ENCODE measurements at regions of chr16 and their contacts with region 1.

Region 1: DNA sequence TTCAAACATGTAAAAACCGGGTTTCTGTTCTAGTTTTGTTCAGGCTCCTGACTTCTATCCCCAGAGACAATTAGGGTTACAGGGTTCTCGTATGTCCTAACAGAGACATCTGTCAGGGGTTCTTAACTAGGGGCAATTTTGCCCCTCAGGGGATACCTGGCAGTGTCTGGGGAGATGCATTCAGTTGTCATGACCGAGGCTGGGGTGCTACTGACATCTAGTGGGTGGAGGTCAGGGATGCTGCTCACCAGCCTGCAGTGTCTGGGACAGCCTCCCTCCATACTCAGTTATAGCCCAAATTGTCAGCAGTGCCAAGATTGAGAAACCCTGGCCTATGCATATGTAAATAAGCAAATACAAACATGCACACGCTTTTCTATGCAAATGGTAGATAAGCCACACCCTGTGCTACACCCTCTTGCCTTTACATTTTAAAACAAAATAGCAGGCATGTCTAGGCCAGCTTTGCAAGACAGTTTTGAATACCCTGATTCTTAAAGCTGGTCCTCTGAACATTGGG is 37.4 kb downstream of the CLEC16A start:
- DNase-seq: peak; percentile 73
- ATAC-seq: peak; percentile 93
- H3K4me3 ChIP-seq: no peak overlapping the region
- H3K4me3 Mint-ChIP-seq: peak overlapping the region; percentile 82
- H3K27ac ChIP-seq: peak overlapping the region in 1 of 2 donors; percentile 10
- H3K27ac Mint-ChIP-seq: peak overlapping the region; percentile 84
- H3K4me1 ChIP-seq: peaks cover 4 to 22% of the 10 kb centered on the region in 2 donors
- H3K4me1 Mint-ChIP-seq: peaks cover 39% of the 10 kb centered on the region
- H3K27me3 ChIP-seq: no peaks in the 10 kb centered on the region
- H3K27me3 Mint-ChIP-seq: no peaks in the 10 kb centered on the region
- CTCF ChIP-seq: peak; percentile 66

Region 2: DNA sequence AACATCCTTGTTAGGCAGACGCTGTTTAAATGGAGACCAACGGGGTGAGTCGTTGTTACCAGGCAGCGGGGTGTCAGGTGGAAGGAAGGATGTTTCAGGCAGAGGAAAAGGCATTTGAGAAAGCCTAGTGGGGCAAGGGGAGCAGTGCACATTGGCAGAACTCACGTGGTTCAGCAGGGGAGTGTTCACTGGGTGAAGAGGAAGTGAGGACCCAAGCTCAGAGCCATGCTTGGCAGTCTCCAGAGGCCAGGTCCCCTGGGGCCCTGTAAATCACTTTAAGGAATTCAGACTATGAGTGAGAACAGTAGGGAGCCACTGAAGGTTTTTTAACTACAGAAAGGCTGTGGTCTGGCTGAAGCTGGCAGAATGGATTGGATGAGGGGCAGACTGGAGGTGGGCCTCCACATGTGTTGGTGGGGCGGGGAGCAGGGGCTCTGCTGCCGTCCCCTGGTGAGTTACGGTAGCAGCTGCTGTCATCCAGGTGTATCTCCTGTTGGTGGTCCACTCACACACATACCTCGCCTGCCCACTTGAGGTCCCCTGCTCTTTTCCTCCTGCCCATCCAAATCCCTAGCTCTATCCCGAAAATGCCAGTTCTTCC is 32.3 kb before region 1 on chr16:
- CTCF ChIA-PET with region 1: interaction called, 24 read pairs
- POLR2A ChIA-PET with region 1: no interaction called
- intact Hi-C with region 1: loop called (anchors 1 kb)
- DNase-seq: peak; percentile 91
- ATAC-seq: peak; percentile 91
- H3K4me3 ChIP-seq: peak overlapping the region in 2 of 5 experiments; percentile 8 to 14
- H3K4me3 Mint-ChIP-seq: peak overlapping the region; percentile 80
- H3K27ac ChIP-seq: peak overlapping the region; percentile 67 to 78
- H3K27ac Mint-ChIP-seq: peak overlapping the region; percentile 96
- H3K4me1 ChIP-seq: peaks cover 52 to 63% of the 10 kb centered on the region in 2 donors
- H3K4me1 Mint-ChIP-seq: peaks cover 75% of the 10 kb centered on the region
- H3K27me3 ChIP-seq: no peaks in the 10 kb centered on the region
- H3K27me3 Mint-ChIP-seq: no peaks in the 10 kb centered on the region
- CTCF ChIP-seq: peak; percentile 59

Region 3: DNA sequence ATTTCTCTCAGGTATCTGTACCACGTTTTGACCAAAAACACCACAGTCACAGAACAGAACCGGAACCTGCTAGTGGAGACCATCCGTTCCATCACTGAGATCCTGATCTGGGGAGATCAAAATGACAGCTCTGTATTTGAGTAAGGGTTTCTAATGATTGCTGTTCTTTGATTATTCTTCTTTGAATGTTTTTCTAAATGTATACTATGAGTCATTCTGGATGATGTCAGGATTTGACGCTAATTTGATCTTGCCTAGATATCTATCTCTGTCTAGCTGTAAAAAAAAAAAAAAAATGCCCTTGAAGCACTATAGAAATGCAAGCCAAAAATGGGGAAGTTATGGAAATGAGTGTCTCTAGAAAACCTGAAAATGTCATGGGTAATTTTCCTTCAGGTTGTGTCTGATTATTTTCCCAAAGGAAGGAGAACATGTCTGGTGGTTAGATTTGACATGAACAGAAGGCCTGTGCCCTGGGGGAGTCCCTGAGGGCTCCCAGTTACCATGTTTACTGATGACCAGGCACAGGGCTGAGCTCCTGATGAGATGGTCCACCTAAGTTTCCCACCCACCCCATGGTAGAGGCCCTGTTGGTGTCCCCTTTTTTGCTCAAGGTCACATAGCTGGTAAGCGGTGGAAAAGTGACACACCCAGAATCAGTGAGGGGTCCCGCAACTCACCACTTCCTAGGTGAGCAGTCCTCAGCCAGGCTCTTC is 23.8 kb before region 1 on chr16:
- CTCF ChIA-PET with region 1: interaction called, 64 read pairs
- POLR2A ChIA-PET with region 1: interaction called, 4 read pairs
- intact Hi-C with region 1: loop called (anchors 1 kb)
- DNase-seq: peak; percentile 31
- ATAC-seq: peak; percentile 63
- H3K4me3 ChIP-seq: no peak overlapping the region
- H3K4me3 Mint-ChIP-seq: peak overlapping the region; percentile 53
- H3K27ac ChIP-seq: peak overlapping the region in 1 of 2 donors; percentile 22
- H3K27ac Mint-ChIP-seq: peak overlapping the region; percentile 62
- H3K4me1 ChIP-seq: peaks cover 21 to 30% of the 10 kb centered on the region in 2 donors
- H3K4me1 Mint-ChIP-seq: peaks cover 49% of the 10 kb centered on the region
- H3K27me3 ChIP-seq: no peaks in the 10 kb centered on the region
- H3K27me3 Mint-ChIP-seq: no peaks in the 10 kb centered on the region
- CTCF ChIP-seq: no peak

Region 4: GRCh38 chr16:10971560-10971961 is 10.2 kb before region 1 on chr16:
- CTCF ChIA-PET with region 1: interaction called, 12 read pairs
- POLR2A ChIA-PET with region 1: interaction called, 3 read pairs
- intact Hi-C with region 1: loop called (anchors 1 kb)
- DNase-seq: peak; percentile 64
- ATAC-seq: peak; percentile 39
- H3K4me3 ChIP-seq: no peak overlapping the region
- H3K4me3 Mint-ChIP-seq: no peak overlapping the region
- H3K27ac ChIP-seq: no peak overlapping the region
- H3K27ac Mint-ChIP-seq: no peak overlapping the region
- H3K4me1 ChIP-seq: no peaks in the 10 kb centered on the region
- H3K4me1 Mint-ChIP-seq: peaks cover 6% of the 10 kb centered on the region
- H3K27me3 ChIP-seq: no peaks in the 10 kb centered on the region
- H3K27me3 Mint-ChIP-seq: no peaks in the 10 kb centered on the region
- CTCF ChIP-seq: peak; percentile 89

Region 5: GRCh38 chr16:11105038-11105903 is 123.5 kb after region 1 on chr16:
- CTCF ChIA-PET with region 1: interaction called, 3 read pairs
- POLR2A ChIA-PET with region 1: no interaction called
- intact Hi-C with region 1: loop called (anchors 5 kb)
- DNase-seq: peak; percentile 70
- ATAC-seq: peak; percentile 92
- H3K4me3 ChIP-seq: peak overlapping the region in 2 of 5 experiments; percentile 8
- H3K4me3 Mint-ChIP-seq: peak overlapping the region; percentile 78
- H3K27ac ChIP-seq: peak overlapping the region in 1 of 2 donors; percentile 68
- H3K27ac Mint-ChIP-seq: peak overlapping the region; percentile 83
- H3K4me1 ChIP-seq: peaks cover 18 to 23% of the 10 kb centered on the region in 2 donors
- H3K4me1 Mint-ChIP-seq: peaks cover 34% of the 10 kb centered on the region
- H3K27me3 ChIP-seq: no peaks in the 10 kb centered on the region
- H3K27me3 Mint-ChIP-seq: no peaks in the 10 kb centered on the region
- CTCF ChIP-seq: no peak